Panc1 (cell line): ENCODE measurements at regions of chr3 and their contacts with region 1.

Region 1: GRCh38 chr3:10205451-10206165 is 40.9 kb downstream of the IRAK2 start:
- DNase-seq: peak; percentile 92
- ATAC-seq: peak; percentile 83
- H3K4me3 ChIP-seq: no peak overlapping the region
- H3K27ac ChIP-seq: peak overlapping the region; percentile 96
- H3K4me1 ChIP-seq: peaks cover 45% of the 10 kb centered on the region
- H3K27me3 ChIP-seq: no peaks in the 10 kb centered on the region
- CTCF ChIP-seq: no peak

Region 2: GRCh38 chr3:10192953-10193691 is 12.5 kb before region 1 on chr3:
- CTCF ChIA-PET with region 1: interaction called, 16 read pairs
- POLR2A ChIA-PET with region 1: no interaction called
- in situ Hi-C with region 1: no loop called
- intact Hi-C with region 1: no loop called
- DNase-seq: no peak
- ATAC-seq: peak; percentile 12; the same call in 1 of the 2 replicates
- H3K4me3 ChIP-seq: no peak overlapping the region
- H3K27ac ChIP-seq: peak overlapping the region; percentile 93
- H3K4me1 ChIP-seq: peaks cover 76% of the 10 kb centered on the region
- H3K27me3 ChIP-seq: no peaks in the 10 kb centered on the region
- CTCF ChIP-seq: no peak

Region 3: DNA sequence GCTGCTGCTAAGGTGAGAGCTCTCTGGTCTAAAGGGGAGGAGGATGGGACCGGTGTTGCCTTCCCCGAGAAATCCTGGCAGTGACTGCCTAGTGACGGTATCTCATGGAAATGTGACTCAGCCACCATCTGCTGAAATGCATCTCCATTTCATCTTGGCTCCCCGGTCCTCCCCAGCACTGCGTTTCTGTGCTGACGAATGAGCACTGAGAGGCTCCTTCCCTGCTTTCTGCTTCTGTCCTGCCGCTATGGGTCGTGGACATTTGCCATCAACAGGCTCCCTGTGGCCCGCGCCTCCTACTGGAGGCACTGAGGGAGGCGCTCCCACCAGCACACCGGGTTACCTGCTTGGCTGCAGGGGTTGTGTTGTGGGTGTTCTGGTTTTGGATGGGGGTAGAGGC is 128.9 kb after region 1 on chr3:
- CTCF ChIA-PET with region 1: no interaction called
- POLR2A ChIA-PET with region 1: no interaction called
- in situ Hi-C with region 1: no loop called
- intact Hi-C with region 1: no loop called
- DNase-seq: no peak
- ATAC-seq: no peak
- H3K4me3 ChIP-seq: no peak overlapping the region
- H3K27ac ChIP-seq: no peak overlapping the region
- H3K4me1 ChIP-seq: no peaks in the 10 kb centered on the region
- H3K27me3 ChIP-seq: no peaks in the 10 kb centered on the region
- CTCF ChIP-seq: no peak